ENCODE measurements at regions of chr4 and their contacts with region 1.

Region 1: DNA sequence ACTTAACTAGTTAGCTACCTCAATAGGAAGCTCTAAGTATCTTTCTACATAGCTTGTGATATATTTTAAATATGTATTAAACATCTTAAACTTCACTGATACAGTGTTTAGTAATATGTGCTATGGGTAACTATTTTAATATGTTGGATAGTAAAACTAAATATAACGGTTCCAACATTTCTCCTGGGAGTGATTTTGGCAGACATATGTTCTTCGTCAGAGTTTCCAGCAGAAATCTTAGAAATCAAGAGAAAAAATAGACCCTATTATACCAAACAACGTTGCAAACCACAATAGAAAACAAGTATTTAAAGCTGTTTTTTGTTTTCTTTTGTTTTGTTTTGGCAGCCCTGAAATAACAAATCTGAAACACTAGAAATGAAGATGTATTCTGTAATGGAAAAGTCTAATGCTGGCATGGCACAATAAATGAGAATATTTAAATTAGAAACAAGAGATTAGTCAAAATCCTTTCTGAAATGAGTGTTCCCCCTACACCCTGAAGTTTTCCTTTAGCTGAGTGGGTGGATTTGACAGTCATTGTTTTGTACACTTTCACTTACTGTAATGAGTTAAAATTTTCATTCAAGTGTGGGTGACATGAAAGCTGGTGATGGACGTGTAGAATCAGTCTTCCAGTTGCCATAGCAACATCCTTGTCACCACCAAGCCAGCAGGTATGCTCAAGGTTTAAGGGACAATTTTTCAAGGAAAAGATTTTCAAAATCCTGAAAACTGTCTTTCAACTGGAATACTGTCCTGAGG is 233.5 kb downstream of the SCFD2 start:
- DNase-seq: no peak
- H3K4me3 Mint-ChIP-seq: peak overlapping the region; percentile 40
- H3K27ac Mint-ChIP-seq: peak overlapping the region; percentile 93
- H3K4me1 Mint-ChIP-seq: peaks cover 17% of the 10 kb centered on the region
- H3K27me3 Mint-ChIP-seq: no peaks in the 10 kb centered on the region

Region 2: GRCh38 chr4:52712172-52712990 is 419.9 kb before region 1 on chr4:
- intact Hi-C with region 1: loop called (anchors 10 kb)
- DNase-seq: peak; percentile 99
- H3K4me3 Mint-ChIP-seq: peak overlapping the region; percentile 98
- H3K27ac Mint-ChIP-seq: peak overlapping the region; percentile 99
- H3K4me1 Mint-ChIP-seq: peaks cover 48% of the 10 kb centered on the region
- H3K27me3 Mint-ChIP-seq: no peaks in the 10 kb centered on the region

Region 3: GRCh38 chr4:53037892-53038291 is 94.4 kb before region 1 on chr4:
- intact Hi-C with region 1: loop called (anchors 1 kb)
- DNase-seq: no peak
- H3K4me3 Mint-ChIP-seq: no peak overlapping the region
- H3K27ac Mint-ChIP-seq: no peak overlapping the region
- H3K4me1 Mint-ChIP-seq: peaks cover 13% of the 10 kb centered on the region
- H3K27me3 Mint-ChIP-seq: no peaks in the 10 kb centered on the region

Region 4: DNA sequence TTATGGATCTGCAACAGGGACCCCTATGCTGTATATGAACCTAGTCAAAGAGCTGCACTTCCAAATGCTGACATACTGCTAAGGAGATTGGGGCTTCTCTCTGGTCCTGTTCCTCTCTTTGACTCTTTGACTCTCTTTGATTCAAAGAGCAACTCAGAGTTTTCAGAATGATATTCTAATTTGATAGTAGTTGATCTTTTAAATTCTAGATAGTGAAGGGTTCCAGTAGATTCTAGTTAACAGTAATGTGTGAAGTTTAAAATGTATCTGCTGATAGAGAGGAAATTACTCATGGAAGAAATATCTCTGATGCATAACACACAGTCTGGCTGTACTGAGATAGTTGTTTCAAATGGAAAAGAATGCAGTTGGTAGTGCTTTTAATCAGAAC is 31.1 kb before region 1 on chr4:
- intact Hi-C with region 1: loop called (anchors 1 kb)
- DNase-seq: no peak
- H3K4me3 Mint-ChIP-seq: no peak overlapping the region
- H3K27ac Mint-ChIP-seq: peak overlapping the region; percentile 70
- H3K4me1 Mint-ChIP-seq: peaks cover 11% of the 10 kb centered on the region
- H3K27me3 Mint-ChIP-seq: no peaks in the 10 kb centered on the region

Region 5: DNA sequence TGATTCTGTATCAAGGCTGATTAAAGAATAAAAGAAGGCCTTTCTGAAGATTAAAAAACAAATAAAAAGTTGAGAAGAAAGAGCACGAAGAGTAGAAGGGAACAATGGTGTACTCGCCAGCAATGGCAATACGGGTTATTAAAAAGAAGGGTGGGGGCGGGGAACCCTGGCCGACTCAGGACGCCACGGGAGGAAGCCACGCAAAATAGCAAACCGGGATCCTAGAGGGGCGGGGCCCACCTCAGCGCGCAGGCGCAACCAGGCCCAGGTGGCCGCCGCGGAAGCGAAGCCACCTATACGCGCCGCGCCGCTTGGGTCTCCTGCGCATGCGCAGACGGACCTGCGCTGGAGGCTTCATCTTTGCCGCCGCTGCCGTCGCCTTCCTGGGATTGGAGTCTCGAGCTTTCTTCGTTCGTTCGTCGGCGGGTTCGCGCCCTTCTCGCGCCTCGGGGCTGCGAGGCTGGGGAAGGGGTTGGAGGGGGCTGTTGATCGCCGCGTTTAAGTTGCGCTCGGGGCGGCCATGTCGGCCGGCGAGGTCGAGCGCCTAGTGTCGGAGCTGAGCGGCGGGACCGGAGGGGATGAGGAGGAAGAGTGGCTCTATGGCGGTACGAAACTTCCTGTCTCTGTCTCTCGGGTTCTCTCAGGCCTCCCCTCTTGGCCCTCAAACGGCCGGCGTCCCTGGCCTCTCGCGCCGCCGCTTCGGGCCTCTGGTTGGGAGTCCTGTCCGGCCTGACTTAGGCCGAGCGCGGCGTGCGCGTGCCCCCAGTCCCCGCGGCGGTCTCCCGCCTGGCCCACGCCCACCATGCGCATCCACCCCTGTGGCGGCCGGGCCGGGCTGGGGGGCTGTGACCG is 245.2 kb after region 1 on chr4 and contains the start of gene FIP1L1:
- intact Hi-C with region 1: loop called (anchors 5 kb)
- DNase-seq: peak; percentile 99
- H3K4me3 Mint-ChIP-seq: peak within 1 kb of the TSS; percentile 99
- H3K27ac Mint-ChIP-seq: peak within 1 kb of the TSS; percentile 98
- H3K4me1 Mint-ChIP-seq: peaks cover 26% of the 10 kb centered on the region
- H3K27me3 Mint-ChIP-seq: peaks cover 6% of the 10 kb centered on the region
- total RNA-seq, gene FIP1L1: 111 and 114 TPM in 2 replicates

Measured in activated CD4-positive, alpha-beta T cell treated with anti-CD3 and anti-CD28 coated beads, Interleukin-2, amount 10 ng/mL, durations not matched to agents 24 days and 14 days (primary cell).